HCT116 (cell line): ENCODE measurements at regions of chr3 and their contacts with region 1.

Region 1: DNA sequence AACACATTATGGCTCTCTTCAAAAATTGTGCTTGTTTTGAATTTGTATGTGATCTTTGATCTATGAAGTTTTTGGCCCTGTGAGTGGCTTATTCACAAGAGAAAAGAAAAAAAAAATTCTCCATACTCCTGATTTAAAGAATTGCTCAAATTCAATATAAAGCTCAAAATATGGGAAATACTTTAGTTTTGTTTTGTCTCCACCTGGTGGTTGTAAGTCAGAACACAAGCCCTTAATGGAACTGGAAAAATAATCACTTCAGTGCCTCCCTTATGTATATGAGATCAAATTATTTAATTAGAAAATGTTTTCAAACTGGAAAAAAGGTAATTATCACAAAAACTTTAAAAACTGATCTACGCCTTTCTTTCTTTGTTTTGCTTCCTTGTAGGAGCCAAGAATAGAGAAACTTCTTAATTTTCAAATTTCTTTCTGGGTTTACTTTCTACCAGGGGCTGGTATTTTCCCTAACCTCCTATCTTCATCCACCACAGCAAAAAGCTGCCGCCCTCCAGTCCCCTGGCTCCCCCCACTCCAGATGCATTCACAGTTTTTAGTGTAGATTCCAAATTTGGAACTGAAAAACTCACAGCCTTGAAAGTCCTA is 50.6 kb downstream of the SERP1 start:
- DNase-seq: peak; percentile 35
- ATAC-seq: peak; percentile 62; the same call in 1 of the 2 replicates
- H3K4me3 ChIP-seq: no peak overlapping the region
- H3K27ac ChIP-seq: no peak overlapping the region
- H3K4me1 ChIP-seq: no peaks in the 10 kb centered on the region
- H3K27me3 ChIP-seq: no peaks in the 10 kb centered on the region
- CTCF ChIP-seq: peak; percentile 53 to 95 (median 78)
- POLR2A ChIP-seq: no peak
- RAD21 ChIP-seq: peak; percentile 94

Region 2: DNA sequence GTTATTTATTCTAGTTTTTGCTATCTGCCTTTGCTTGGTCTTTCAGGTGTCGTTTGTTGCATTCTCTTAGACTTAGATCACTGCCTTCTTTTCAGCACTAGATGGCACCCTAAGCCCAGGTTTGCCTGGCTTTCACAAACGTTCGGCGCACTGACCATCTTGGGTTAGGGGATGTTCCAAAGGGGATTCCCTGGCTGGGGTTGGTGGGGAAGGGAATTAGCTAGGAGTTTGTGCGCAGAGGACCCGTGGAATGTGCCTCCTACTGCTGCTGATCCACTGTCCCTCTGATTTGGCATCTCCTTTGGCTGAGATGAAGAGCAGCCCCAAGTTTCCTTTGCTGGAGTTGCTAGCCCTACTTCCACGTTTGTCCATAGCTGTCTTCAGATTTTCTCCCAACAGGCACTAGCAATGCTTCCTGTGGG is 558.8 kb before region 1 on chr3:
- CTCF ChIA-PET with region 1: interaction called, 4 read pairs
- POLR2A ChIA-PET with region 1: no interaction called
- RAD21 ChIA-PET with region 1: no interaction called
- intact Hi-C with region 1: loop called (anchors 10 kb)
- DNase-seq: peak; percentile 31
- ATAC-seq: peak; percentile 90
- H3K4me3 ChIP-seq: no peak overlapping the region
- H3K27ac ChIP-seq: no peak overlapping the region
- H3K4me1 ChIP-seq: peaks cover 0 to 4% of the 10 kb centered on the region in 2 experiments; a peak in 1 of 4 replicates
- H3K27me3 ChIP-seq: no peaks in the 10 kb centered on the region
- CTCF ChIP-seq: peak; percentile 63 to 88 (median 80); a peak in 5 of 6 replicates
- POLR2A ChIP-seq: no peak
- RAD21 ChIP-seq: peak; percentile 84

Region 3: DNA sequence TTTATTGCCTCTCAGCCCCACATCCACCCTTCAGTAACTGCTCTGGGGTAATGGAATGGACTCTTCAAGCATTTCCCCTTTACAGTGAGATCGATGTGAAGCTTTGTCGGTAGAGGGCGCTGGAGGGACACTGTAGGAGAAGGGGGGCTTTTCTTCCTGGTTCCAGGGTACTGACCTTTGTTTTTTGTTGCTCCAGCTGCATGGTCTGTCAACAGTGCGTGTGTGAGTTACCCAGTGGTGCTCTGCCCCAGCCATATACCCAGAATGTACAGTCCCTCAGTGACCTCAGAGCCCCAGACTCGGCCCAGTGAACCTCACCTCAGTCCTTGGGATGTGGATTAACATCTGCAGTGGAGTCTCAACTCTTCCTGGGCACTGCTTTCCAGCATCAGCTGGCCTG is 267.8 kb before region 1 on chr3:
- CTCF ChIA-PET with region 1: interaction called, 25 read pairs
- POLR2A ChIA-PET with region 1: no interaction called
- RAD21 ChIA-PET with region 1: interaction called in 1 of 2 experiments, 4 read pairs
- intact Hi-C with region 1: loop called (anchors 2 kb)
- DNase-seq: peak; percentile 32
- ATAC-seq: peak; percentile 94
- H3K4me3 ChIP-seq: no peak overlapping the region
- H3K27ac ChIP-seq: no peak overlapping the region
- H3K4me1 ChIP-seq: no peaks in the 10 kb centered on the region
- H3K27me3 ChIP-seq: no peaks in the 10 kb centered on the region
- CTCF ChIP-seq: peak; percentile 70 to 90 (median 85); a peak in 5 of 6 replicates
- POLR2A ChIP-seq: no peak
- RAD21 ChIP-seq: peak; percentile 90

Region 4: DNA sequence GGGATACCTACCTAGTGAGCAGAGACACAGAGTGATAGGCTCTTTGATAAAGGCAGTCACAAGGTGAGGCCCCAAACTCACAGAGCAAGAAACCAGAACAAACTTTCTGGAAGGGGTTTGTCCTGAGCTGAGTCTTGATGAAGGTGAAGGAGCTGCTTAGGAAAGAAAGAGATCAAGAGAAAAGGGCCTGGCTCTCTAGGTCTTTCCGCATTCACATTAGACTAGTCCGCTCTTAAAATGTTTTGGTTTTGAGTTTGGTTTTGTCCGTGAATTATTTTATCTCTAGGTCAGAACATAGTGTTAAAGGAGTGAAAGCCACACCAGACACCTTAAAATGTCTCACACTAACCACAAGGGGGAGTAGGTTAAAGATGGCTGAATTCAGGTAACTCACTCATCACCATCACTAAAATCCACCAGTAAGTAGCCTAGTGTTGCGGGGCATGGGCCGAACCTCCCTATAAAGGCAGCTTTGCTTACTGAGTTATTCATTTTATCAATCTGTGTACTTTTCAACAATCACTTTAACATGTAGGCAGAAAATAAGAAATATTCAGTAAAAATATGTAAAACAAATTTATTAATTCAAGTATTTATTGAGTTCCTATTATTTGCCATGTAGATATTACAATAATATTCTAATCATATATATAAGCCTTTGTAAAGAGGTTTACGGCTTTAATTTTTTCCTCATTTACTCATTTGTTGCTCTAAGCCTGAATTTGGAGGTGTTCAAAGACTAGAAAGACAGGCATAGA is 209.1 kb before region 1 on chr3:
- CTCF ChIA-PET with region 1: interaction called, 19 read pairs
- POLR2A ChIA-PET with region 1: no interaction called
- RAD21 ChIA-PET with region 1: no interaction called
- intact Hi-C with region 1: loop called (anchors 1 kb)
- DNase-seq: peak; percentile 66
- ATAC-seq: peak; percentile 98
- H3K4me3 ChIP-seq: no peak overlapping the region; a peak in 1 of 4 replicates
- H3K27ac ChIP-seq: no peak overlapping the region
- H3K4me1 ChIP-seq: peaks cover 3 to 15% of the 10 kb centered on the region in 2 experiments; a peak in 3 of 4 replicates
- H3K27me3 ChIP-seq: no peaks in the 10 kb centered on the region
- CTCF ChIP-seq: peak; percentile 59 to 75 (median 62)
- POLR2A ChIP-seq: no peak
- RAD21 ChIP-seq: peak; percentile 68

Region 5: GRCh38 chr3:150372722-150373121 is 122.9 kb before region 1 on chr3:
- CTCF ChIA-PET with region 1: no interaction called
- POLR2A ChIA-PET with region 1: no interaction called
- RAD21 ChIA-PET with region 1: no interaction called
- intact Hi-C with region 1: no loop called
- DNase-seq: no peak
- ATAC-seq: peak; percentile 35
- H3K4me3 ChIP-seq: no peak overlapping the region
- H3K27ac ChIP-seq: peak overlapping the region; percentile 66; the same call in 1 of the 2 replicates
- H3K4me1 ChIP-seq: peaks cover 36 to 53% of the 10 kb centered on the region in 2 experiments
- H3K27me3 ChIP-seq: no peaks in the 10 kb centered on the region
- CTCF ChIP-seq: peak; percentile 5 to 50 (median 33); a peak in 5 of 6 replicates
- POLR2A ChIP-seq: no peak
- RAD21 ChIP-seq: peak; percentile 9; the same call in 1 of the 2 replicates

Region 6: GRCh38 chr3:150408221-150409102 is 87.2 kb before region 1 on chr3 and contains the start of gene TSC22D2:
- CTCF ChIA-PET with region 1: interaction called, 12 read pairs
- POLR2A ChIA-PET with region 1: interaction called, 4 read pairs
- RAD21 ChIA-PET with region 1: interaction called in 1 of 2 experiments, 7 read pairs
- intact Hi-C with region 1: no loop called
- DNase-seq: peak; percentile 79
- ATAC-seq: peak; percentile 79
- H3K4me3 ChIP-seq: peak within 1 kb of the TSS; percentile 70 to 85
- H3K27ac ChIP-seq: peak within 1 kb of the TSS; percentile 95
- H3K4me1 ChIP-seq: peaks cover 10 to 42% of the 10 kb centered on the region in 2 experiments
- H3K27me3 ChIP-seq: no peaks in the 10 kb centered on the region
- CTCF ChIP-seq: no peak
- POLR2A ChIP-seq: peak; percentile 53
- RAD21 ChIP-seq: peak; percentile 12; the same call in 1 of the 2 replicates
- total RNA-seq, gene TSC22D2: 20.0 TPM

Region 7: DNA sequence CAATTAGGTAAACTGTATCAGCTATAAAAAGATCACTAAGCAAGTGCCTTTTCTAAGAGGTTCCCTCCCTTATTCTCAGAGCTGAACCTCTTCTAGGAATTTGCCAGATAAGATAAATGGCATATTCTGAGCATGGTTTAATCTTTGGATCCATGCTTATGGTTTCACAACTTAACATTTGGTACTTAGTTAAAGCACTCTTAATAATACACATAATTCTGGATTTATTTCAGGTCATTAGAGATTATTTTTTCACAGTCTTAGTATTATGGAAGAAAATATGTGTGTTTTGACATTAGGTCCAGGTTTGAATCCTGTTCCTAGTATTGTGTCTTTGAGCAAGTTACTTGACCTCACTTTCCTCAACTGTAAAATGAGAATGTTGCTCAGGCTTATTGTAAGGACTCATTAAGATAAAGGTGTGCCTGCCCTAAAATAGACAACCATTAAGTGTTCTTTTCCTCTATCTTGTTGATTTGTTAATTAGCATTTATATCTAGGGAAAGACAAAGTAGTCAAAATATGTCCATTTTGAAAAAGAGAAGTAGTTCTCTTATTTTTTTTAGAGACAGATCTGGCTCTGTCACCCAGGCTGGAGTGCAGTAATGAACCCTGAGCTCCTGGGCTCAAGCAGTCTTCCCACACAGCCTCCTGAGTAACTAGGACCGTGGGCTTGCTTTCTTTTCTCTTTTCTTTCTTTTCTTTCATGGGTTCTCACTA is 44.2 kb before region 1 on chr3:
- CTCF ChIA-PET with region 1: no interaction called
- POLR2A ChIA-PET with region 1: no interaction called
- RAD21 ChIA-PET with region 1: no interaction called
- intact Hi-C with region 1: no loop called
- DNase-seq: no peak
- ATAC-seq: no peak
- H3K4me3 ChIP-seq: no peak overlapping the region
- H3K27ac ChIP-seq: no peak overlapping the region
- H3K4me1 ChIP-seq: peaks cover 7 to 23% of the 10 kb centered on the region in 2 experiments
- H3K27me3 ChIP-seq: no peaks in the 10 kb centered on the region
- CTCF ChIP-seq: no peak
- POLR2A ChIP-seq: no peak
- RAD21 ChIP-seq: no peak

Region 8: DNA sequence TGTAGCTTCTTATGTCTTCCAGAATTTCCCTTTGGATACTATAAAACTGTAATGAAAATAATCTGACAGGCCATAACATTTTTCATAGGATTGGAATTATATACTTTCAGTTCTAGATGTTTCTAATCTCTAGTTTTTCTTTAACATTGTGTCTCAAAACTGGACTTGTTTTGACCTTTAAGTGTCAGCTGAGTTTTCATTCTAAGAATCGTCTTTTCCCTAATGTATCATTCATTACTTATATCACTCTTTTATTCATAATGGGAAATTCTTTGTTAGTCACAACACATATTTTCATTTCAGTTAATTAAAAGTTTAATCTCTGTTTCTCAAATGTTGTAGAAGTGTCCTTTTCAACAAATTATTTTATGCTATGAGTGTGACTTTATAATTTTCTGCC is 695.4 kb after region 1 on chr3:
- CTCF ChIA-PET with region 1: no interaction called
- POLR2A ChIA-PET with region 1: no interaction called
- RAD21 ChIA-PET with region 1: no interaction called
- intact Hi-C with region 1: no loop called
- DNase-seq: no peak
- ATAC-seq: no peak
- H3K4me3 ChIP-seq: no peak overlapping the region
- H3K27ac ChIP-seq: no peak overlapping the region
- H3K4me1 ChIP-seq: no peaks in the 10 kb centered on the region
- H3K27me3 ChIP-seq: no peaks in the 10 kb centered on the region
- CTCF ChIP-seq: no peak
- POLR2A ChIP-seq: no peak
- RAD21 ChIP-seq: no peak